ENCODE measurements at regions of chr20 and their contacts with region 1.

Region 1: GRCh38 chr20:11544029-11544678 is 373.5 kb upstream of the BTBD3 start:
- DNase-seq: peak; percentile 75
- H3K4me3 ChIP-seq: no peak overlapping the region
- H3K27ac ChIP-seq: no peak overlapping the region
- H3K4me1 ChIP-seq: no peaks in the 10 kb centered on the region
- H3K27me3 ChIP-seq: no peaks in the 10 kb centered on the region
- CTCF ChIP-seq: peak; percentile 40 to 78 (median 70)
- POLR2A ChIP-seq: no peak

Region 2: GRCh38 chr20:10469599-10469998 is 1074.6 kb before region 1 on chr20:
- intact Hi-C with region 1: loop called (anchors 10 kb)
- DNase-seq: peak; percentile 85
- H3K4me3 ChIP-seq: no peak overlapping the region
- H3K27ac ChIP-seq: no peak overlapping the region
- H3K4me1 ChIP-seq: no peaks in the 10 kb centered on the region
- H3K27me3 ChIP-seq: no peaks in the 10 kb centered on the region
- CTCF ChIP-seq: peak in 3 of 4 experiments; percentile 71 to 85 (median 80)
- POLR2A ChIP-seq: no peak

Region 3: DNA sequence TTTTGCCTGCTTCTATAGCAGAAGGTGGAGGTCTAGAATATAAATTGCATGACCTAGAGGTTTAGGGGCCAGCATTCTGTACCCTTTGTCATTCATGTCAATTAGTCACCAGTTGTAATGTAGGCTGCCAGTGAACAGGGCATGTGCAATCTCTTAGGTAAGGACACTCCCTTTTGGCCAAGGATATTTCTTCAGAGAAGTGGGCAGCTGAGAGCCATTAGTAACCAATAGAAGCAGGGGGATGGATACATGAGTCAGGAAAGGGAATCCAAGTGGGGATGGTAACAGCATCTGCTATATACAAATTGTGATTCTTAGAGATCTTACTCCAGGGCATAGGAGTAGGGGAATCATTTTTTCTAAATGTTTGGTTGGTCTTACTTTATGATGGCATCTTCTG is 376.1 kb before region 1 on chr20:
- intact Hi-C with region 1: no loop called
- DNase-seq: no peak
- H3K4me3 ChIP-seq: no peak overlapping the region
- H3K27ac ChIP-seq: no peak overlapping the region
- H3K4me1 ChIP-seq: no peaks in the 10 kb centered on the region
- H3K27me3 ChIP-seq: no peaks in the 10 kb centered on the region
- CTCF ChIP-seq: no peak
- POLR2A ChIP-seq: no peak

Region 4: GRCh38 chr20:11274141-11274594 is 270.0 kb before region 1 on chr20:
- intact Hi-C with region 1: loop called (anchors 5 kb)
- DNase-seq: peak; percentile 54
- H3K4me3 ChIP-seq: no peak overlapping the region
- H3K27ac ChIP-seq: no peak overlapping the region
- H3K4me1 ChIP-seq: no peaks in the 10 kb centered on the region
- H3K27me3 ChIP-seq: no peaks in the 10 kb centered on the region
- CTCF ChIP-seq: peak in 3 of 4 experiments; percentile 47 to 69 (median 68)
- POLR2A ChIP-seq: no peak

Measured in prostate gland (tissue), 2 donors.